ENCODE measurements at regions of chr3 and their contacts with region 1.

Region 1: GRCh38 chr3:187714404-187714979 is 12.1 kb upstream of the RTP2 start:
- DNase-seq: peak in 1 of 2 experiments; percentile 86
- H3K4me3 ChIP-seq: no peak overlapping the region
- H3K27ac ChIP-seq: no peak overlapping the region
- H3K4me1 ChIP-seq: peaks cover 0 to 4% (median 4%) of the 10 kb centered on the region in 4 experiments; a peak in 4 of 7 replicates
- H3K27me3 ChIP-seq: no peaks in the 10 kb centered on the region
- CTCF ChIP-seq: peak; percentile 64 to 92 (median 92)
- EP300 ChIP-seq: no peak
- POLR2A ChIP-seq: no peak
- RAD21 ChIP-seq: peak; percentile 99

Region 2: DNA sequence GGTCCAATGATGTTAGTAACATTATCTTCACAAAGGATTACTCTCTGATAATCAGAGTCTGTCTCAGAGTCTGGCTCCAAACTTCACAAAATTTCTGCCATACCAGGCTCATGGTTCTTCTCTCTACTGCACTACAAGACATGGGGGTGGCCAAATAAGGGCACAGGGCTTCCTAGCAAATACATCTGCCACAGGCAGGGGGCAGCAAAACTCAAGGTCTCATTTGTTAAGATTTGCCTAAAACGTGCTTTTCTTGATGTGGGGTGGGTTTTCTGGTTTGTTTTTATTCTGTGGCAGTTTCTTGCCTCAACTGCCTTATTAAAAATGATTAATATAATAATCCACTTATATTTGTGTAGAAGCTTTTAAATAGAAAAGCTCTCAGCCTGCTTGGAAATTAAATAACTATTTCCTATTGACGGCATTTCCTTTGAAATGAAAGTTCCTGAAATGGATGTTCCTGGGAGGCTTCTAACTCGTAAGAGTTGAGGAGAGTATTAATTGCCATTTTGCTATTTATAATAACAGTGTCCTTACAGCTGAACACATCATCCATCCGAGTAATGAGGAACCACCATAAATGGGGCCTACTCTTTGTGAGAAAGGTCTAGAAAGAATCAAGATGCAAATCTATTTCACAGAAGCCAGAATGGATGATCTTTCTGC is 98.1 kb before region 1 on chr3:
- CTCF ChIA-PET with region 1: interaction called, 10 read pairs
- POLR2A ChIA-PET with region 1: no interaction called
- DNase-seq: peak; percentile 38 to 76
- H3K4me3 ChIP-seq: no peak overlapping the region
- H3K27ac ChIP-seq: no peak overlapping the region
- H3K4me1 ChIP-seq: peaks cover 2 to 10% (median 7%) of the 10 kb centered on the region in 4 experiments; a peak in 5 of 7 replicates
- H3K27me3 ChIP-seq: peaks cover 22 to 33% (median 27%) of the 10 kb centered on the region in 4 experiments; a peak in 5 of 7 replicates
- CTCF ChIP-seq: peak; percentile 52 to 77 (median 72)
- EP300 ChIP-seq: no peak
- POLR2A ChIP-seq: no peak
- RAD21 ChIP-seq: peak; percentile 77 to 83

Region 3: DNA sequence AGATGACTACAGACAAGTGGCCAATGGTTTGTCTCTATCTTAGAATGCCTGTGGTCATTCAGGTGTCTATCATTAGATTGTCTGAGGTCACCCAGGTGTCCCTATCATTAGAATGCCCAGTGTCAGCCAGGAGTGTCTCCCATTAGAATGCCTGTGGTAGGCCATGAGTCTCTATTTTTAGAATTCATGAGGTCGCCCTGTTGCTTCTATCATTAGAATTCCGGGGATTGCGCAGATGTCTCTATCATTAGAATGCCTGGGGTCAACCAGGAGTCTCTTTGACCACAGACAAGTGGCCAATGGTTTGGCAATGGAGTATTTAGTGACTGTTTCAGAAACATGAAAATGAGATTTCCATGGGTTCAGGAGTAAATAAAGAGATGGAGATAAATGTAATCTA is 19.7 kb before region 1 on chr3:
- CTCF ChIA-PET with region 1: interaction called, 63 read pairs
- POLR2A ChIA-PET with region 1: no interaction called
- DNase-seq: no peak
- H3K4me3 ChIP-seq: no peak overlapping the region
- H3K27ac ChIP-seq: no peak overlapping the region
- H3K4me1 ChIP-seq: no peaks in the 10 kb centered on the region
- H3K27me3 ChIP-seq: no peaks in the 10 kb centered on the region
- CTCF ChIP-seq: no peak
- EP300 ChIP-seq: no peak
- POLR2A ChIP-seq: no peak
- RAD21 ChIP-seq: no peak

Measured in H1 (cell line).